ENCODE measurements at regions of chr11 and their contacts with region 1.

Region 1: DNA sequence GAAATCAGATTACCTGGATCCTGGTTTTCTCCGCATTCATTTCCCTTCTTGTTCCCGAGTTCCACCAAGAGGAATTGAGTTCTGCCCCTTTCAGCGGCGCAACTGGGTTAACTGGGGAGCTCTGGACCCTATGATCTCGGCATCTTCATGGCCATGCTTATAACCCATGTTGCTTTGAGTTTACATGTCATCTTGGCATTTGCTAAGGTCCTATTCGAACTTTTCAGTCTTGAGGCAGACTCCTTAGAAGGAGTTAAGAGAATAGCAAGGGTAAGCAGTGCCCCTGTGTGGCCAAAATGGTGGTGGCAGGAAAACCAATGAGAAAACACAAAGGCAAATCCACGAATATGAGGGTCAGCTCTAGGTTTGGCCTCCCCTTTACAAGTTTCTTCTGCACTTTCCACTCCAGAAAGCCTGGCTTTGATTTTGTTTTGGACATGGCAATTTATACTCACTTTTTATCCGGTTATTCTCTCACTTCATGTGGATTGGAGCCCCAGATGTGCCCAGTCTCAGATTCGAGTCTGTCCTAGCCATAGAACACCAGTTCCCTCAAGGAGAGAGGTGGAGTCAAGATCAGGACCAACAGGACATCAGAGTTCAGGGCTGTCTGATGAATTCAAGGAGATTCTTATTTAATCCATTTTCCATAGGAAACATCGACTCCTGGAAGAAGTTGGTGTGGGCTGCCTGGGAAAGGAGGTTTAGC is 55.3 kb upstream of the FBXO3 start:
- DNase-seq: peak; percentile 62 to 70
- H3K4me3 ChIP-seq: peak overlapping the region; percentile 54
- H3K27ac ChIP-seq: no peak overlapping the region
- H3K4me1 ChIP-seq: peaks cover 18% of the 10 kb centered on the region
- H3K27me3 ChIP-seq: no peaks in the 10 kb centered on the region
- CTCF ChIP-seq: peak; percentile 88

Region 2: GRCh38 chr11:32809313-32809712 is 1020.3 kb before region 1 on chr11:
- CTCF ChIA-PET with region 1: no interaction called
- POLR2A ChIA-PET with region 1: no interaction called
- intact Hi-C with region 1: loop called (anchors 10 kb)
- DNase-seq: peak; percentile 66 to 73
- H3K4me3 ChIP-seq: no peak overlapping the region
- H3K27ac ChIP-seq: no peak overlapping the region
- H3K4me1 ChIP-seq: no peaks in the 10 kb centered on the region
- H3K27me3 ChIP-seq: no peaks in the 10 kb centered on the region
- CTCF ChIP-seq: peak; percentile 94

Region 3: DNA sequence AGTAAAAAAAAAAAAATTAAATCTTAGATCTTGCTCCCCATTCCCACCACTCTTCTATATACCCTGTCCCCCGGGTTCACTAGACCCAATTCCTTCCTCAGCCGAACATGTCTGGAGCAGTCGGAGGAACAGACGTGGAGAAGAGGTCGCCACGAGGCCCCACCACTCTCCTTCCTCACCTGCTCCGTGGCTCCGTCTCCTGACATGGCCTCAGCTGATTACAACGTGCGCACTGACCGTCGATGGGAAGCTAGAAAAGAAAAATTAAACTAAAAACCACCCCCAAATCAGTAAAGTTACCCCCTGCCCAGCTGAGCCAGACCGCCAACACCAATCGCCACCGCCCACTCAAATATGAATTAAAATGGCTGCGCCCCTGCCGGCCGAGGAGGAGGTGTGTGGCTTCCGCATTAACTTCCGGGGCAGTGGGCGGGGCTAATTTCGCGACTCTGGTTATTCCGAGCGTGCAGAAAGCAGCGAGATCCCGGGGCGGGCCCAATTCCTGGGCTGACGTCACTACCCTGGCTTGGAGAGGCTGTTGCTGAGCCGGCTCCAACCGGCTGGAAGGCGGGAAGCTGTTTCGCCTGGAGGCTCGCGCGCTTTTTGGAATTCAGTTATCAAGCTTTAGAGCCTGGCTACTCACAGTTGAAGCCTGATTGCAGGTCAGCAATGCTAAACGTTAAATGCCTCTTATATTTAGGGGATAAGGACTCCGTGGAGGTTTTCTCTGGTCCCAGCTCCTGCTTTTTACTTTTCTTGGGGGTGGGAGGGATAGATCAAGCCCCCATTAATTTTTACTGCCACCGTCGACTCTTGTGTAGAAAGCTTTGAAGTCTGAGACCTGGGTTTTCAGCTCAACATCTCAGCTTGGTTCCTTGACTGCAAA is 668.2 kb before region 1 on chr11 and contains the start of gene CSTF3:
- CTCF ChIA-PET with region 1: no interaction called
- POLR2A ChIA-PET with region 1: no interaction called
- intact Hi-C with region 1: loop called (anchors 1 kb)
- DNase-seq: peak; percentile 97 to 100
- H3K4me3 ChIP-seq: peak within 1 kb of the TSS; percentile 76
- H3K27ac ChIP-seq: peak within 1 kb of the TSS; percentile 75
- H3K4me1 ChIP-seq: peaks cover 35% of the 10 kb centered on the region
- H3K27me3 ChIP-seq: no peaks in the 10 kb centered on the region
- CTCF ChIP-seq: peak; percentile 65
- total RNA-seq, gene CSTF3: 45.6 and 46.5 TPM in 2 replicates

Region 4: GRCh38 chr11:33716236-33716635 is 113.4 kb before region 1 on chr11:
- CTCF ChIA-PET with region 1: no interaction called
- POLR2A ChIA-PET with region 1: no interaction called
- intact Hi-C with region 1: loop called (anchors 5 kb)
- DNase-seq: peak in 1 of 2 experiments; percentile 69
- H3K4me3 ChIP-seq: no peak overlapping the region
- H3K27ac ChIP-seq: peak overlapping the region; percentile 11; the same call in 1 of the 2 replicates
- H3K4me1 ChIP-seq: peaks cover 11% of the 10 kb centered on the region
- H3K27me3 ChIP-seq: no peaks in the 10 kb centered on the region
- CTCF ChIP-seq: peak; percentile 47

Region 5: GRCh38 chr11:33855500-33855899 is 25.9 kb after region 1 on chr11:
- CTCF ChIA-PET with region 1: no interaction called
- POLR2A ChIA-PET with region 1: no interaction called
- intact Hi-C with region 1: no loop called
- DNase-seq: no peak
- H3K4me3 ChIP-seq: no peak overlapping the region
- H3K27ac ChIP-seq: no peak overlapping the region
- H3K4me1 ChIP-seq: no peaks in the 10 kb centered on the region
- H3K27me3 ChIP-seq: peaks cover 20% of the 10 kb centered on the region; the same call in 1 of the 2 replicates
- CTCF ChIP-seq: no peak

Region 6: DNA sequence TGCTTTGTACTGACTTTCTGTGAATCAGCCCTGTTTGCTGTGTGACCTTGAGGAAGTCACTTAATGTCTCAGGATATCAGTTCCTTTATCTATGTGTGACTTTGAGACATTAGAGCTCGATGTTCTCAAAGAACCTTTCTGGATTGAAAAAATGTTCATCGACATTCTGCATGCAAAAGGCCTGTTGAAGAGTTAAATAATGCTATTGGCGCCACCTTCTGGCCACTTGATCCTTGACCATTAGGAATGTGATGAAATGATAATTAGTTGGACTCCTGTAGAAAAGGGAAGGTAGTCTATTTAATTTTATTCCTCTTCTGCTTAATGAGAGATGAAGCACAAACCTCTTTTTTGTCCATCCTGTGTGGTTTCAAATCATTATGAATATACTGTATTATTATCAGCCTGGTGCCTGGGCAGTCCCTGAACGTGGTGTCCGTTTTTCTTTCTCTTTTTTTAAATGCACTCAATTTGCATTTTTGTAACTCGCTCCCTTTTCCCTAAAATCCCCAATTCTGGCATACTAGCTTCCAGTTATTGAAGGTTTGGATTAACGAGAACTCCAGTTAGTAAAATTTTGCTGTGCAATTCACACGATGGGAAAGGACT is 663.3 kb after region 1 on chr11:
- CTCF ChIA-PET with region 1: no interaction called
- POLR2A ChIA-PET with region 1: no interaction called
- intact Hi-C with region 1: loop called (anchors 10 kb)
- DNase-seq: peak; percentile 41 to 62
- H3K4me3 ChIP-seq: no peak overlapping the region
- H3K27ac ChIP-seq: no peak overlapping the region
- H3K4me1 ChIP-seq: peaks cover 8% of the 10 kb centered on the region
- H3K27me3 ChIP-seq: no peaks in the 10 kb centered on the region
- CTCF ChIP-seq: peak; percentile 91

Measured in PC-9 (cell line).